ENCODE measurements at regions of chr3 and their contacts with region 1.

Region 1: DNA sequence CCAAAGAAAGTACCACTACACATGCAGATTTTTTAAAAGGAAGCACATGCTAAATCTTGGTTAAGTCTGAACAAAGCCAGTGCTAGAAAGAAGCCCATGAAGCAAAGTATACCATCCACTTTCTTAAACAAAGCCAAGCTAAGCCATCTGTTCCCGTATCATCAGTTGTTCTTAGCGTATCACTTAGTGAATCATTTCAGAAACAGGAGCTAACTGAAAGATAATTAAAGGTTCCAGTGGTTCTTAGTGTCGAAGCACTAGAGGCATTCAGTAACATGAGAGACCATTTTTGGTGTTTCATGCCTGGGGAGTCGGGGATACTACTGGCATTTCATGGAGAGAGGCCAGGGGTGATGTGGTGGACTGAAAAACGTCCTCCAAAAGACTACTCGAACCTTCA is 12.8 kb downstream of the UBXN7 start:
- DNase-seq: no peak
- ATAC-seq: no peak
- H3K4me3 ChIP-seq: no peak overlapping the region
- H3K27ac ChIP-seq: no peak overlapping the region
- H3K4me1 ChIP-seq: peaks cover 7% of the 10 kb centered on the region
- H3K27me3 ChIP-seq: no peaks in the 10 kb centered on the region
- CTCF ChIP-seq: no peak
- EP300 ChIP-seq: no peak
- POLR2A ChIP-seq: no peak
- RAD21 ChIP-seq: no peak

Region 2: GRCh38 chr3:196406811-196407470 is 12.4 kb before region 1 on chr3:
- CTCF ChIA-PET with region 1: interaction called, 3 read pairs
- POLR2A ChIA-PET with region 1: interaction called, 4 read pairs
- RAD21 ChIA-PET with region 1: interaction called, 3 read pairs
- SMC1A ChIA-PET with region 1: interaction called, 11 read pairs
- in situ Hi-C with region 1: no loop called
- intact Hi-C with region 1: no loop called
- DNase-seq: no peak
- ATAC-seq: no peak
- H3K4me3 ChIP-seq: no peak overlapping the region
- H3K27ac ChIP-seq: no peak overlapping the region
- H3K4me1 ChIP-seq: peaks cover 5% of the 10 kb centered on the region
- H3K27me3 ChIP-seq: no peaks in the 10 kb centered on the region
- CTCF ChIP-seq: no peak
- EP300 ChIP-seq: no peak
- POLR2A ChIP-seq: no peak
- RAD21 ChIP-seq: no peak

Region 3: GRCh38 chr3:196531418-196531817 is 112.0 kb after region 1 on chr3:
- CTCF ChIA-PET with region 1: no interaction called
- POLR2A ChIA-PET with region 1: no interaction called
- RAD21 ChIA-PET with region 1: no interaction called
- SMC1A ChIA-PET with region 1: no interaction called
- in situ Hi-C with region 1: no loop called
- intact Hi-C with region 1: no loop called
- DNase-seq: no peak
- ATAC-seq: no peak
- H3K4me3 ChIP-seq: no peak overlapping the region
- H3K27ac ChIP-seq: no peak overlapping the region
- H3K4me1 ChIP-seq: peaks cover 13% of the 10 kb centered on the region
- H3K27me3 ChIP-seq: no peaks in the 10 kb centered on the region
- CTCF ChIP-seq: no peak
- EP300 ChIP-seq: no peak
- POLR2A ChIP-seq: no peak
- RAD21 ChIP-seq: no peak